A549 (cell line): ENCODE measurements at regions of chr10 and their contacts with region 1.

Region 1: GRCh38 chr10:119445311-119445934 is 97.1 kb downstream of the RGS10 start:
- DNase-seq: peak; percentile 77 to 81
- ATAC-seq: peak; percentile 81 to 94
- H3K4me3 ChIP-seq: no peak overlapping the region
- H3K27ac ChIP-seq: no peak overlapping the region
- H3K4me1 ChIP-seq: peaks cover 8% of the 10 kb centered on the region
- CTCF ChIP-seq: peak; percentile 91
- EP300 ChIP-seq: no peak
- POLR2A ChIP-seq: no peak
- RAD21 ChIP-seq: peak; percentile 88 to 90

Region 2: GRCh38 chr10:119028900-119029612 is 416.4 kb before region 1 on chr10:
- CTCF ChIA-PET with region 1: no interaction called
- POLR2A ChIA-PET with region 1: no interaction called
- DNase-seq: peak; percentile 88 to 91
- ATAC-seq: peak; percentile 61 to 84
- H3K4me3 ChIP-seq: peak overlapping the region; percentile 83
- H3K27ac ChIP-seq: peak overlapping the region; percentile 82 to 85
- H3K4me1 ChIP-seq: peaks cover 31% of the 10 kb centered on the region
- CTCF ChIP-seq: no peak
- EP300 ChIP-seq: no peak
- POLR2A ChIP-seq: no peak
- RAD21 ChIP-seq: peak in 1 of 2 experiments; percentile 12; a peak in 1 of 5 replicates

Region 3: DNA sequence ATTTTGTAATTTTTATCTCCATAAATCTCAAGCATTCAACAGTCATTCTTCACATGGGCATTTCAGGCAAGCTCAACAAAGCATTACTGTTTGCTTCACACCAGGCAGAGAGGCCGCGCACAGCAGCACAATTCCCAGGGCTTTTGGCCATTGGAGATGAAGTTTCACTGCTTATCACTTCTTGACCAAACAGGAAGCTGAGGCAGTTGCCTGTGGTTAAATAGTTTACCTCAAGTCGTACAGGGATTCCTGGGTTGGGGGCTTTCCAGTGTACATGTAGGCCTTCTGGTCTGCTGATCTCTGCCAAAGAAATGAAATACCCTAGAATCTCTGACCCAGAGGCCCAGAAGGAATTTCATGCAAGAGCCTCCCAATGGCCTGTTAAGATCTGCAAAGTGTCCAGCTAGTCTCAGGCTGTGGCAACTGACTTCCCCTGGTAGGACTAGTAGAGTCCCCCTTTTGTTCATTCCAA is 255.6 kb before region 1 on chr10:
- CTCF ChIA-PET with region 1: interaction called, 25 read pairs
- POLR2A ChIA-PET with region 1: no interaction called
- DNase-seq: no peak
- ATAC-seq: peak; percentile 14 to 52; a peak in 4 of 6 replicates
- H3K4me3 ChIP-seq: no peak overlapping the region
- H3K27ac ChIP-seq: peak overlapping the region; percentile 46 to 76
- H3K4me1 ChIP-seq: peaks cover 17% of the 10 kb centered on the region
- CTCF ChIP-seq: no peak
- EP300 ChIP-seq: no peak
- POLR2A ChIP-seq: no peak
- RAD21 ChIP-seq: no peak

Region 4: GRCh38 chr10:119290291-119291048 is 155.0 kb before region 1 on chr10:
- CTCF ChIA-PET with region 1: interaction called, 10 read pairs
- POLR2A ChIA-PET with region 1: no interaction called
- DNase-seq: peak in 1 of 2 experiments; percentile 49
- ATAC-seq: peak; percentile 75 to 76
- H3K4me3 ChIP-seq: no peak overlapping the region
- H3K27ac ChIP-seq: peak overlapping the region; percentile 34 to 67; a peak in 5 of 6 replicates
- H3K4me1 ChIP-seq: peaks cover 21% of the 10 kb centered on the region
- CTCF ChIP-seq: peak; percentile 42
- EP300 ChIP-seq: no peak
- POLR2A ChIP-seq: no peak
- RAD21 ChIP-seq: peak; percentile 62 to 67

Region 5: GRCh38 chr10:119401671-119402395 is 43.6 kb before region 1 on chr10:
- CTCF ChIA-PET with region 1: interaction called, 16 read pairs
- POLR2A ChIA-PET with region 1: no interaction called
- DNase-seq: peak; percentile 77 to 89
- ATAC-seq: peak; percentile 85 to 89
- H3K4me3 ChIP-seq: no peak overlapping the region
- H3K27ac ChIP-seq: peak overlapping the region; percentile 23 to 76; a peak in 4 of 6 replicates
- H3K4me1 ChIP-seq: peaks cover 15% of the 10 kb centered on the region
- CTCF ChIP-seq: no peak
- EP300 ChIP-seq: no peak
- POLR2A ChIP-seq: no peak
- RAD21 ChIP-seq: no peak

Region 6: DNA sequence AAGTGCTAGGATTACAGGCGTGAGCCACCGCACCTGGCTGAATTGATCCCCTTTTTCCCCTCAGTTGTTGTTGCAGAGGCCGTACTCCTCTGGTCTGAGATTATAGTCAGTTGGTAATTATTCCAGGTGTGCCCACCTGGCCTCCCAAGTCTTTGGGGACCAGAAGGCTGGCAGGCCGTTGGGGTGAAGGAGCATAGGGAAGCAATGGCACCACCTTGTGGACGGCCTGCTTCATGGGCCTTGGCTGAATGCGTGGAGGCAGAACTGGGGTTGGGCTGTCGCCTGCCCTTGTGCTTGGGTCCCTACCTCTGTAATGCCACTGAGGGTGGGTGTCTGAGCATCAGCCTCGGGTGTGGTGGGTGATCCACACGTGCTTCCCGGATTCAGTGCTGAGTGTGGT is 28.6 kb before region 1 on chr10:
- CTCF ChIA-PET with region 1: interaction called, 102 read pairs
- POLR2A ChIA-PET with region 1: no interaction called
- DNase-seq: peak; percentile 62 to 90
- ATAC-seq: peak; percentile 81 to 93
- H3K4me3 ChIP-seq: no peak overlapping the region
- H3K27ac ChIP-seq: peak overlapping the region in 1 of 2 experiments; percentile 53; a peak in 1 of 6 replicates
- H3K4me1 ChIP-seq: no peaks in the 10 kb centered on the region
- CTCF ChIP-seq: peak; percentile 82
- EP300 ChIP-seq: no peak
- POLR2A ChIP-seq: no peak
- RAD21 ChIP-seq: peak; percentile 93 to 95

Region 7: DNA sequence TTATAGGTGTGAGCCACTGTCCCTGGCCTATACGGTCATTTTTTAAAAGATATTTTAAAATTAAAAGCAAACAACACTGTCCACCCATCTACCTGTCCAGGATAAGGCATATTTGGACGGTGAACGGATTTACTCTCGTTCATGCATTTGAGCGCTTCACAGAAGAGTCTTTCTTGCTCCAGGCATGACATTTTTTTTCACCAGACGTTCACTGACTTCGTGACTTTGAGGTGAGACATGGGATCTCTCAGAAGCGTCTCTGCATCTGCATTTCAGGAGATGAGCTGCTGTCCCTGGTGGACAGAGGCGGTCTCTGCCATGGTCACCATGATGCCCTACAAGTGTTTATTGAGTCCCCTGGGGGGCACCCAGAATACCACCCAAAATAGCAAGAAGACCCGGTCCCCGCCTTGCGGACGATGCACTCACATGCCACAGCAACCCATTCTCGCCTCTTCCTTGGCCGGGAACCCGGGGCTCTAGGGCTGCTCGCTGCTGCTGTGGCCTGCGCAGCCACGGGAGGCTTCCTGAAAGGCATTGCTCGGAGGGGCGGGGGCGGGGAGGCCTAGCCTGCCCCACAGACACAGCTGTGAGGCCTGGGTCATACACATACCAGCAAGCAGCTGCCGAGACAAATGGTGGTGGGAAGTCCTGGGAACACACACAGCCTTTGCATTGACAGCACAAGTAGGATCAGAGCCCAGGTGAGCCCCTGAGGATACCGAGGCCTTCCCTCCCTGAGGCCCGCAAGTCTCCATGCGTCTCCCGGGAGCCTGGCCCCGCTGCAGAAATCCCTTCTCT is 12.7 kb after region 1 on chr10:
- CTCF ChIA-PET with region 1: interaction called, 31 read pairs
- POLR2A ChIA-PET with region 1: no interaction called
- DNase-seq: no peak
- ATAC-seq: no peak
- H3K4me3 ChIP-seq: no peak overlapping the region
- H3K27ac ChIP-seq: no peak overlapping the region
- H3K4me1 ChIP-seq: no peaks in the 10 kb centered on the region
- CTCF ChIP-seq: no peak
- EP300 ChIP-seq: no peak
- POLR2A ChIP-seq: no peak
- RAD21 ChIP-seq: no peak

Region 8: DNA sequence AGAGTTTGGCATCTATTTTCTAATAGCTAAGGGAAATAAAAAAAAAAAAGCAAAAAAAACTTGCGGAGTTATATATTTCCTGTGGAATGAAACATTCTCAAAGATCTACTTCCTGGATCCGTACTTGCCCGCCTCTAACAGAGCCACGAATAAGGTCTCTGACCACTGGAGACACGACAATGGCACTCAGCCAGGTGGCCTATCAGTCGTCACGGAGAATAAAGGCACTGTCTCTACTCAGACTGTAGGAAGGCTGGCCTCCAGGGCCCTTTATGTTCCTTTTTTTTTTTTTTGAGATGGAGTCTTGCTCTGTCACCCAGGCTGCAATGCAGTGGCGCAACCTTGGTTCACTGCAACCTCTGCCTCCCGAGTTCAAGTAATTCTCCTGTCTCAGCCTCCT is 38.4 kb after region 1 on chr10:
- CTCF ChIA-PET with region 1: interaction called, 19 read pairs
- POLR2A ChIA-PET with region 1: no interaction called
- DNase-seq: no peak
- ATAC-seq: no peak
- H3K4me3 ChIP-seq: no peak overlapping the region
- H3K27ac ChIP-seq: no peak overlapping the region
- H3K4me1 ChIP-seq: peaks cover 10% of the 10 kb centered on the region
- CTCF ChIP-seq: no peak
- EP300 ChIP-seq: no peak
- POLR2A ChIP-seq: no peak
- RAD21 ChIP-seq: no peak